Caco-2 (cell line): ENCODE measurements at regions of chr7 and their contacts with region 1.

Region 1: DNA sequence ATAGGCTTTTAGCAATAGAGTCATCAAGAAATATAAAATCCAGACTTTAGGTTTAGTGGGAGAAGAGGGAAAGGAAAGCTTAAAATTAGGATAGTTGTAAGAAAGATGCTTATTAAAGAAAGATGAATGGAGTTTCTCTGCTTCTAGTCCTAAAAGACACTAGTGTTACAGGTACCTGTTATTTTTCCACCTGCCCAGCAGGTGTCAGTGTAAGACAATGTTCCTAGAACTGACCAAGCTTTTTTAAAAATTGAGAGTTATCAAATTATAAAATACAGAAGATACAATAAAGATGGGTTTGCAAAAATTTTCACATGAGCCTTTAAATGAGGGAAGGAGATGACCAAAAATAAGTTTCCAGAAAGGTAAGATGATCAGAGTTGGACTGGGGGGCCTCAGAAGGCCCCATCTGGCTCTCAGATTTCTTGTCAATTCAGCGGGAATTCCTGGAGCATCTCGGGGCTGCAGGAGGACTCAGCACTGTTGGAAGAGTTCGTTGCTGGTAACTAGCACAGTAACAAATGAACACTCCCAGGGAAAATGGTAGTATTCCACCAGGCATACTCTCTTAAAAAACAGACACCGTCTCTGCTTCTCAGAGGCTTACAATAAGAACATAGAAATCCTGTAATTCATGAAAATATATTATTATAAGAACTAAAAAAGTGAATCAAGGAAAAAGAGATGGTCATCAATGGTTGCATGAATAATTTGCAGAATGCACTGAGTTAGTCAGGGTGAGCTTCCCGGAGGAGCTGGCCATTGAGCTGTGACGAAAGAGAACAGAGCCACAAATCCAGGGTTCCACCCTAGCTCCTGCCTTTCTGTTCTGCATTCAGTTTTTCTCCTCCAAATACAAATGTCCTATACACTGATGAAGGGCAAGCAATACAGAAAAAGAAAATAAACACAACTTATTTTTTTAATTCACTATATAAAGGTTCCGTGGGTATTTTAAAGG is 71.8 kb upstream of the PIK3CG start:
- DNase-seq: peak in 1 of 2 experiments; percentile 43
- H3K4me3 ChIP-seq: no peak overlapping the region
- H3K4me3 Mint-ChIP-seq: no peak overlapping the region
- H3K27ac Mint-ChIP-seq: no peak overlapping the region
- H3K4me1 ChIP-seq: no peaks in the 10 kb centered on the region
- H3K4me1 Mint-ChIP-seq: no peaks in the 10 kb centered on the region
- H3K27me3 ChIP-seq: no peaks in the 10 kb centered on the region; the same call in 1 of the 2 replicates
- H3K27me3 Mint-ChIP-seq: peaks cover 12% of the 10 kb centered on the region
- CTCF ChIP-seq: peak; percentile 68 to 75

Region 2: DNA sequence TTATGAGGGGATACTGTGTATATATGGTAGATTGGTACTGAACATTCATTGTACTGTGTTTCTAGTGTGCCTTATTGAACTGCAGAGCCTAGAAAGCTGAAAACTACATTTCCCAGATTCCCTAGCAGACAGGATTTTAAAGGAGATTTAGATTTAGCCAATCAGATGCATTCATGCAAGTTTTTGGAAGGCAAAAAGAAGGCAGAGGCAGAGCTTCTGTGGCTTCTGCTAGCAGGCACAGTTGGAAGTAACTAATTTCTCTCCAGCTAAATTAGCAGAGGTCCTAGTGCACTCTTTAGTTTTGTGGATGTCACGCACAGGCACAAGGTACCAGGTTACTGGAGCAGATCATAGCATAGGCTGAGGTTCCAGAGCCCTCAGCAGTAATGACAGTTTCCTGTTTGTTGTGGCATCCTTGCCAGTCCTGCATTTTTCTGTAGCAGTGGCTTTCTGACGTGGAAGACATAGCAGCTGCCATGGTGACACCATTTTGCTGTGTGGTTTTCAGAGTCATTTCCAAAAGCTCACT is 48.7 kb before region 1 on chr7:
- CTCF ChIA-PET with region 1: no interaction called
- POLR2A ChIA-PET with region 1: no interaction called
- intact Hi-C with region 1: no loop called
- DNase-seq: no peak
- H3K4me3 ChIP-seq: no peak overlapping the region
- H3K4me3 Mint-ChIP-seq: no peak overlapping the region
- H3K27ac Mint-ChIP-seq: no peak overlapping the region
- H3K4me1 ChIP-seq: no peaks in the 10 kb centered on the region
- H3K4me1 Mint-ChIP-seq: no peaks in the 10 kb centered on the region
- H3K27me3 ChIP-seq: no peaks in the 10 kb centered on the region
- H3K27me3 Mint-ChIP-seq: no peaks in the 10 kb centered on the region
- CTCF ChIP-seq: no peak

Region 3: DNA sequence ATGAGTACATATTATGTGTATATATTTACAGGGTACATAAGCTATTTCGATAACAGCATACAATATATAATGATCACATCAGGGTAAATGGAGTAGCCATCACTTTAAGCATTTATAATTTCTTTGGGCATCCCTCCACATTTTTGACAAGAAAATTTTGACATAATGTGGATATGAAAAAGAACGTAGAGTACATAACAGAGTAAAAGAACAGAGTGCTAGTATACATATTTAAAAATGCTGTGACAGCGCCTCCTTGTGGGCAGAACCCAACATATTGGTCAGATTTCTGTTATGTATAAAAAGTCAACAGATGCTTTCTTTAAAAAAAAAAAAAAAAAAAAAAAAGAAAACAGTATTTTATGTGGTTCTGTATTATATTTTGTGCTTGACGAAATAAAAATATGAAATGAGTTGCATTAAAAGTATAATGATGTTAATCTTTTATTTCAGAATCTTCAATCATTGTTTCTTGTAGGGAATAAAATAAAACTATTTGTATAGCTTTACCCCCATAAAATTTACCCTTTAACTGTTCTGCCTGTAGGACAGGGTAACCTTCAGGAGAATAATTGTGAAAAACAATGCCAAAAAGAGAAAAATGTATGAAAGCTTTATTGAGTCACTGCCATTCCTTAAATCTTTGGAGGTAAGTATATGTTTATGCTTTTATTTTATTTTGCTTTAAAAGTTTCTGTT is 357.2 kb after region 1 on chr7:
- CTCF ChIA-PET with region 1: interaction called, 5 read pairs
- POLR2A ChIA-PET with region 1: no interaction called
- intact Hi-C with region 1: loop called (anchors 1 kb)
- DNase-seq: peak; percentile 53 to 63
- H3K4me3 ChIP-seq: no peak overlapping the region
- H3K4me3 Mint-ChIP-seq: no peak overlapping the region
- H3K27ac Mint-ChIP-seq: no peak overlapping the region
- H3K4me1 ChIP-seq: no peaks in the 10 kb centered on the region
- H3K4me1 Mint-ChIP-seq: peaks cover 7% of the 10 kb centered on the region
- H3K27me3 ChIP-seq: no peaks in the 10 kb centered on the region
- H3K27me3 Mint-ChIP-seq: no peaks in the 10 kb centered on the region
- CTCF ChIP-seq: peak; percentile 62 to 81